CD4-positive, alpha-beta T cell (primary cell): ENCODE measurements at regions of chr14 and their contacts with region 1.

Region 1: DNA sequence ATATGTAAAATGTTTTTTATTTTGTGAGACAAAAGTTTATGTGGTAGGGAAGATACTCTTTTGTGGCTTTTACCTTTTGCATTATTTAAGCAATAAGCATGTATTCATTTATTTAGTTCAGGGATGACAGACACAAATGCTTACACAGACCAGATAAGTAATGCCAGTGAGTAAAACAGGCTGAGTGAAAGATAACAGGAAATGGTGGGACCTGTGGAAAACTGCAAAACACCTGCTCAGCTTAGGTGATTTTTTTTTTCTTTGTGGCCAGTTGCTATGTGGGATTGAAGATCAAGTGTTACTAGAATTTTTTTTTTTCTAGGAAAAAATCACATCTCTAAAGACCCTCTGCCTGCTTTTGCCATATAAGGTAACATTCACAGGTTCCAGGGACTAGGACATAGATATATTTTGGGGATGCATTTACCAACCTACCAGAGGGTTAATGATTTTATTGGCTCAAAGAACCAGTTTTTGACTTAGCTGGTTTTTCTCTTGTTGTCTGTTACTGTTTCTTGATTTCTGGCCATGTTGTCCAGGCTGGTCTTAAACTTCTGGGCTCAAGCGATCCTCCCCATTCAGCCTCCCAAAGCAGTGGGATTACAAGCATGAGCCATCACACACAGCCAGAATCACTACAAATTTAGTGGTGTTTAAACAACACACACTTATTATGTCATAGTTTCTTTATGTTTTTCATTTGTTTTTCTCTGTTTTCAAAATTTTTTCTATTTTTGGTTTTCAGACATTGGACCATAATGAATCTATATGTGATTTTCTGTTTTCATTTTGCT is 9.8 kb downstream of the PSMA6 start:
- DNase-seq: peak in 1 of 14 experiments; percentile 18
- ATAC-seq: peak; percentile 32
- H3K4me3 ChIP-seq: no peak overlapping the region
- H3K4me3 Mint-ChIP-seq: peak overlapping the region; percentile 61
- H3K27ac ChIP-seq: no peak overlapping the region
- H3K27ac Mint-ChIP-seq: peak overlapping the region; percentile 74
- H3K4me1 ChIP-seq: peaks cover 49% of the 10 kb centered on the region
- H3K4me1 Mint-ChIP-seq: peaks cover 56% of the 10 kb centered on the region
- H3K27me3 ChIP-seq: no peaks in the 10 kb centered on the region
- H3K27me3 Mint-ChIP-seq: no peaks in the 10 kb centered on the region
- CTCF ChIP-seq: no peak

Region 2: DNA sequence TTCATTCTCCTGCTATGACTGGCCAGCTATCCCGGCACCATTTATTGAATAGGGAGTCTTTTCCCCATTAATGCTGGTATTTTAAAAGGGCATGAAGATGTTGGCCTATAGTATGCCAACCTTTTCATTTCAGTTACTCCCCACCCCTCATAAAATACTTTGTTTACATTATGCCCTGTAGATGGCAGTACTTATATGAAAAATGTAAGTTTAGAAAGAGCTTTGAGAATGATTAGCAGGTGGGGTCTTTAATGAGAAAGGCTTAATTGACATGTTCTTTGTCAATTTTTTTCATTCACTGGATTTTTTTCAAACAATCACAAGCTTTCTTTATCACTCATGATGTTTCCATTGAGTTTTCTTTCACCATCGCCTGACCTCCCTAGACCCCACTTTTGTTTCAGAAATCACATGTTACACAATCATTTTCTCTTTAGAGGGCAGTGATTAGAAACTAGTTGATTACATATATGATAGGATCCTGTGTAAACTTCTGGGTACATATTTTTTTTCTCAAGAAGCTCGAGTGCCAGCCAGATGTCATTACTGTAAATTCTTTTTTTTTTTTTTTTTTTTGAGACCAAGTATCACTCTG is 72.3 kb before region 1 on chr14:
- CTCF ChIA-PET with region 1: no interaction called
- POLR2A ChIA-PET with region 1: no interaction called
- intact Hi-C with region 1: loop called in 1 of 2 experiments (anchors 5 kb)
- DNase-seq: peak in 3 of 14 experiments; percentile 39 to 52 (median 45)
- ATAC-seq: peak; percentile 51
- H3K4me3 ChIP-seq: no peak overlapping the region
- H3K4me3 Mint-ChIP-seq: no peak overlapping the region
- H3K27ac ChIP-seq: no peak overlapping the region
- H3K27ac Mint-ChIP-seq: no peak overlapping the region
- H3K4me1 ChIP-seq: peaks cover 10% of the 10 kb centered on the region
- H3K4me1 Mint-ChIP-seq: peaks cover 19% of the 10 kb centered on the region
- H3K27me3 ChIP-seq: no peaks in the 10 kb centered on the region
- H3K27me3 Mint-ChIP-seq: no peaks in the 10 kb centered on the region
- CTCF ChIP-seq: peak; percentile 64